GM10248 (cell line): ENCODE measurements at regions of chr6 and their contacts with region 1.

Region 1: DNA sequence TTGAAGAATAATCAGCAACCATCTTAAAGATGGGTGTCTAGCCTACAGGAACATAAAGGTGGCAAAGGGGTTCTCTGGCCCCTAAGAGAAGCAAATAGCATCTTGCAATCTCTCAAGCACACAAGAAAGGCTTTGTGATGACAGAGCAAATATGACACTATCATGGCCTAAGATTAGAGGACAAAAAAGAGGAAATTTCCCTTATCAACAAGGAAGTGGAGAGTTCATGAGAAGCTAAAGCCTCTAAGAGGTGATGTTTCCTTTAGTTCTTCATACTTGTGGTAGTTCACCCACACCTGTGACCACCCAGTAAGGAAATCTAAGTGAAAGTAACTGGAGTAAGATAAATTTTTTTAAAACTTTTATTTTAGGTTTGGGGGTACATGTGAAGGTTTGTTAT is 88.4 kb downstream of the OLIG3 start:
- DNase-seq: no peak
- CTCF ChIP-seq: no peak

Region 2: GRCh38 chr6:137416376-137417109 is 10.7 kb after region 1 on chr6:
- CTCF ChIA-PET with region 1: interaction called, 12 read pairs
- POLR2A ChIA-PET with region 1: no interaction called
- DNase-seq: no peak
- CTCF ChIP-seq: no peak